ENCODE measurements at regions of chr22 and their contacts with region 1.

Region 1: DNA sequence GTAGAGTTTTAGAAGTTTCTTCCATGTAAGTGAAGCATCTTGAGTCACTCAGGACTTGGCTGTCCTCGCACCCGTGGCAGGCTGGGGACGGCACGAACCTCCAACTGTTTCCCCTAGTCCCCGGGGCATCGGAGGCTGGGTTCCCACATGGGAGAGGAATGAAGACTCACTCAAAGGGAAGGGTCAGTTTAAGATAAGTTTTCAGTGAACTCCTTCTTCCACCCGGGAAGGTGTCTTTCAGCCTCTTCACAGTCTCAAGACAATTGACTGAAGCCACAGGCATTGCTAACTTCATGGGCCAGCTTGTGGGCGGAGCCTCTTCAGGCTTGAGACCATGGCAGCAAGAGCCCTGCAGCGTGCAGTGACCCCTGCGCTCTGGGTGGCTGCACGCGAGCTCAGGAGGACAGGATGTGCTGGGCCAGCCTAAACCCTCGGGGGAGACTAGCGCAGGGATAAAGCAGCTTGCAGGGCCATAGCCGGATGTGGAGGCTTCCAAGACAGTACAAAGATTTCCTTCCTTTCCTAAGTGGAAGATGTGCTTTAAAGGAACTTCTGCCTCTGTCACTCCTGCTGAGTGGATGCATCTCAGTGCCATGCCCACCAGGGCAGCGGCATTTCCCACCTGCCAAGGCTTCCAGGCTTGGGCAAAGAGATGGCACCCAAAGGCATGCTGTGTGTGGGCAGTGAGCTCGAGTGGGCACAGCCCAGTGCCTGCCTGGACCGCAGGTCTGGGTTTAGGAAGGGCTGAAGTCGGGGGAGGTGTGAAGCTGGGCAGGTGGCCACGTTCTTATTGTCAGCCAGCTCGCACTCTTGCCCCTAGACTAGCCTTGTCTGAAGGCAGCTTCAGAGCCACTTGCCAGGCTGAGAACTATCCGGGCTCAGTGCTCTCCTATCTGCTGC is 32.9 kb downstream of the PPIL2 start:
- DNase-seq: no peak
- H3K4me3 ChIP-seq: no peak overlapping the region
- H3K4me3 Mint-ChIP-seq: no peak overlapping the region
- H3K27ac ChIP-seq: no peak overlapping the region
- H3K27ac Mint-ChIP-seq: peak overlapping the region in 1 of 7 donors; percentile 11
- H3K4me1 ChIP-seq: no peaks in the 10 kb centered on the region
- H3K4me1 Mint-ChIP-seq: no peaks in the 10 kb centered on the region
- H3K27me3 ChIP-seq: no peaks in the 10 kb centered on the region
- H3K27me3 Mint-ChIP-seq: no peaks in the 10 kb centered on the region
- CTCF ChIP-seq: no peak

Region 2: DNA sequence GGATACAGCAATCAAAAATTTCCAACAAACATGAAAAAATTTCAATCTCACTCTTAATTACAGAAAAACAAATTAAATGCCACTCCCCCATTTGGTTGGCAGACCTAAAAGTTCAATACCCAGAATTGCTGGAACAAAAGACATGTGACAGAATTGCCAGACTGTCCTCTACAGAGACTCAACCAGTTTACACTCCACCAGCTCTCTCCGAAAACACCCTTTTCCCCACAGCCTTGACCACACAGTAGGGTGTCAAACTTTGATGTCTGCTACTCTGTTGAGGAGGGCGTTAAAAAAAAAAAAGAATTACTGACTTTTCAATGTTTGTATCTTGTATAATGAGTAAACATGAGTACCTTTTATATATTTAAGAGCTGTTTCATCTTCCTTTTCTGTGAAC is 81.6 kb after region 1 on chr22:
- intact Hi-C with region 1: loop called in 1 of 2 experiments (anchors 10 kb)
- DNase-seq: no peak
- H3K4me3 ChIP-seq: no peak overlapping the region
- H3K4me3 Mint-ChIP-seq: no peak overlapping the region
- H3K27ac ChIP-seq: no peak overlapping the region
- H3K27ac Mint-ChIP-seq: peak overlapping the region in 4 of 7 donors; percentile 3 to 53 (median 17)
- H3K4me1 ChIP-seq: no peaks in the 10 kb centered on the region
- H3K4me1 Mint-ChIP-seq: no peaks in the 10 kb centered on the region
- H3K27me3 ChIP-seq: no peaks in the 10 kb centered on the region
- H3K27me3 Mint-ChIP-seq: peaks cover 0 to 1% (median 0%) of the 10 kb centered on the region in 3 donors
- CTCF ChIP-seq: no peak